Psoas muscle (tissue), 8 donors: ENCODE measurements at regions of chr3 and their contacts with region 1.

Region 1: GRCh38 chr3:109116031-109116430 is 1.9 kb downstream of the MORC1 start:
- DNase-seq: no peak
- ATAC-seq: no peak
- H3K4me3 ChIP-seq: no peak overlapping the region
- H3K27ac ChIP-seq: no peak overlapping the region
- H3K4me1 ChIP-seq: no peaks in the 10 kb centered on the region
- H3K27me3 ChIP-seq: peaks cover 0 to 3% (median 0%) of the 10 kb centered on the region in 3 donors
- CTCF ChIP-seq: no peak

Region 2: DNA sequence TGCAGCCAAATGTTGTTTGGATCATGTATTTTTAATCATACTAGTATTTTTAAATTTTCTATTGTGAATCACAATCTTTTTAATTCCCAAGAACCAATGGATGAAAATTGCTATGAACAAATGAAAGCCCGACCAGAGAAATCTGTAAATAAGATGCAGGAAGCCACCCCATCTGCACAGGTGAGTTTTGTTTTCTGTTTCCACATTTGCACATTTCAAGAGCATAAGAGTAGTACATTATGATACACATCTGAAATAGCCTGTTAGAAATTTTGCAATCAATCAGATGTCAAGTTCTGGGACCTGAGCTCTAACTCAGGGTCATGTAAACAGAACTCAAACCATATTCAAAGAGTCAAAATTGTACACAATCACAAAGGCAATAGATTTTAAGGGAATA is 267.0 kb before region 1 on chr3:
- intact Hi-C with region 1: no loop called
- DNase-seq: no peak
- ATAC-seq: no peak
- H3K4me3 ChIP-seq: no peak overlapping the region
- H3K27ac ChIP-seq: no peak overlapping the region
- H3K4me1 ChIP-seq: no peaks in the 10 kb centered on the region
- H3K27me3 ChIP-seq: no peaks in the 10 kb centered on the region
- CTCF ChIP-seq: no peak

Region 3: DNA sequence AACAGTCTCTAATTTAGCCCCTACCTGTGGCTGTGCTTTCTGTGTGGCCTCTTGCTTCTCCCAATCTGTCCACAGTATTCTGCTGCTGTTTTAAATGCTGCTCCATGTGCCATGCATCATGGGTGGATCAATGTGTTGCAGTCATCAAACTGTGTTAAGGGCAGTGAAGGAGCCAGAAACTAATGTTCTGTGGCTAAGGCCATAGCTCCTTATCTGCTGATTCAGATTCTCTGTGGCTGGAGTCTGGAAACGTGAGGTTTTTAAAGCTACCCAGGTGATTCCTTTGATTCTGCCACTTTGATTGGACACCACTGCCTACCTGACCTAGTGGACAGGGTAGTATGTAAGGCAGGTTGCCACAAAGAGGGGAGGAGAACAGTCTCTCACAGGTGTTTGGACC is 42.9 kb before region 1 on chr3:
- intact Hi-C with region 1: loop called in 1 of 2 experiments (anchors 1 kb)
- DNase-seq: no peak
- ATAC-seq: no peak
- H3K4me3 ChIP-seq: no peak overlapping the region
- H3K27ac ChIP-seq: no peak overlapping the region
- H3K4me1 ChIP-seq: peaks cover 14% of the 10 kb centered on the region
- H3K27me3 ChIP-seq: no peaks in the 10 kb centered on the region
- CTCF ChIP-seq: no peak